Naive thymus-derived CD4-positive, alpha-beta T cell (primary cell): ENCODE measurements at regions of chrX and their contacts with region 1.

Region 1: GRCh38 chrX:129678614-129679195 is 23.9 kb upstream of the APLN start:
- DNase-seq: peak in 7 of 9 donors; percentile 6 to 40 (median 34)
- ATAC-seq: peak; percentile 78
- H3K4me3 ChIP-seq: peak overlapping the region; percentile 53
- H3K4me3 Mint-ChIP-seq: peak overlapping the region; percentile 62 to 85 (median 70)
- H3K27ac ChIP-seq: peak overlapping the region; percentile 38
- H3K27ac Mint-ChIP-seq: peak overlapping the region in 7 of 9 donors; percentile 5 to 91 (median 48)
- H3K4me1 ChIP-seq: peaks cover 5 to 14% of the 10 kb centered on the region in 2 donors
- H3K4me1 Mint-ChIP-seq: peaks cover 10 to 36% (median 23%) of the 10 kb centered on the region in 7 donors
- H3K27me3 ChIP-seq: no peaks in the 10 kb centered on the region
- H3K27me3 Mint-ChIP-seq: peaks cover 0 to 21% (median 0%) of the 10 kb centered on the region in 5 donors

Region 2: DNA sequence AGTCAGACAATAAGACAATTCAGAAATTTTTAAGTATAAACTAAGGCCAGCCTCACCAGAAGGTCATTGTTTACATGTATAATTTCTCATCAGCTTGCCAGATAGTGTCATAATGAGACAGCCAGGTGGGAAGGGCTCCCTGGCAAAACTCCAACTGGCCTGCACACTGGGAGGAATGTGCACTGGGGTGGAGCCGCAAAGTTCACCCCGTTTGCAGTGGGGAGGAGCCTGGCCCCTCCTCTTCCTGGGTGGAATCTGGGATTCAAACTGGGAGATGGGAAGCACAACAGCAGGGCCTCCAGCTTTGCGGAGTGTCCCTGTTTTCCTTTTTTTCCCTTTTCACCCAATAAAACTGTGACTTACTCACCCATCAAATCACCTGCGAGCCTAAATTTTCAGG is 485.3 kb before region 1 on chrX:
- CTCF ChIA-PET with region 1: no interaction called
- POLR2A ChIA-PET with region 1: no interaction called
- intact Hi-C with region 1: no loop called
- DNase-seq: no peak
- ATAC-seq: no peak
- H3K4me3 ChIP-seq: no peak overlapping the region
- H3K4me3 Mint-ChIP-seq: no peak overlapping the region
- H3K27ac ChIP-seq: no peak overlapping the region
- H3K27ac Mint-ChIP-seq: no peak overlapping the region
- H3K4me1 ChIP-seq: no peaks in the 10 kb centered on the region
- H3K4me1 Mint-ChIP-seq: no peaks in the 10 kb centered on the region
- H3K27me3 ChIP-seq: no peaks in the 10 kb centered on the region
- H3K27me3 Mint-ChIP-seq: no peaks in the 10 kb centered on the region

Region 3: DNA sequence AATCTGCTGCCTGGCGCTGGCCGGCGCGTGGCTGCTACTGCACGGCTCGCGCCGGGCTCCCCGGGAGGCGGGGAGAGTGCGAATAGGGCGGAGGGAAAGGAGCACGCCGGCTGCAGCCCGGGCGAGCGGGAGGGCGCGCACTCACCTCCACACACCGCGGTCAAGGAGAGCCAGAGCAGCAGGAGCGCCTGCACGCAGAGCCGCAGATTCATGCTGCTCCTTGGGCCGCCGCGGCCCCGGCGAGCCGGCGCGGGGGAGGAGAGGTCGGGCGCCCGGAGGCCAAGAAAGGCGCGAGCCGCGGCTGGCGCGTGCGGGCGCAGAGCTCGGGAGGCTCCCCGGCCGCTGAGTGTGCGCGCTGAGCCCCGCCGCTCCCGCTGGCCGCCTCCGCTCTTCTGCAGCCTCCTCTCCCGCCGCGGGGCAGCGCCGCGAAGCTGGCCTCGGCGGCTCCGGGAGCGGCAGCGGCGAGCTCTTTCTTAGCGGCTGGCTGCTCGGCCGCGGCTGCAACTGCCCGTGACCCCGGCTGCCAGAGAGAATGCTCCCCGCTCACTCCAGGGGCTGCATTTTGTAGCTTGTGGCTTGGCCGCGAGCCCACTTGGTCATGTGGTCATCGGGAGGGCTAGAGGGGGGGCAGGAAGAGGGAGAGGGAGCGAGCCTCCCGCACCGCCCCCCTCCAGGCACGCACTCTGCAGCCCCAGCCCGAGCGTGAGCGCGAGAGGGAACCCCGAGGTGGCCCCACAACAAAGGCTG is 24.1 kb before region 1 on chrX and contains the start of gene APLN:
- CTCF ChIA-PET with region 1: no interaction called
- POLR2A ChIA-PET with region 1: no interaction called
- intact Hi-C with region 1: loop called in 1 of 2 experiments (anchors 1 kb)
- DNase-seq: peak in 2 of 9 donors; percentile 18 to 28
- ATAC-seq: peak; percentile 64
- H3K4me3 ChIP-seq: peak within 1 kb of the TSS; percentile 9
- H3K4me3 Mint-ChIP-seq: peak within 1 kb of the TSS; percentile 54 to 85 (median 68)
- H3K27ac ChIP-seq: no peak within 1 kb of the TSS
- H3K27ac Mint-ChIP-seq: peak within 1 kb of the TSS in 1 of 9 donors; percentile 9
- H3K4me1 ChIP-seq: peaks cover 3 to 7% of the 10 kb centered on the region in 2 donors
- H3K4me1 Mint-ChIP-seq: peaks cover 6 to 12% (median 9%) of the 10 kb centered on the region in 7 donors
- H3K27me3 ChIP-seq: no peaks in the 10 kb centered on the region
- H3K27me3 Mint-ChIP-seq: peaks cover 4 to 25% (median 5%) of the 10 kb centered on the region in 5 donors
- total RNA-seq, gene APLN: 0.10 TPM in 1 of 5 experiments, not detected in the others

Region 4: GRCh38 chrX:129719931-129720530 is 41.3 kb after region 1 on chrX:
- CTCF ChIA-PET with region 1: no interaction called
- POLR2A ChIA-PET with region 1: no interaction called
- intact Hi-C with region 1: loop called (anchors 5 kb)
- DNase-seq: no peak
- ATAC-seq: no peak
- H3K4me3 ChIP-seq: no peak overlapping the region
- H3K4me3 Mint-ChIP-seq: no peak overlapping the region
- H3K27ac ChIP-seq: no peak overlapping the region
- H3K27ac Mint-ChIP-seq: no peak overlapping the region
- H3K4me1 ChIP-seq: peaks cover 5 to 9% of the 10 kb centered on the region in 2 donors
- H3K4me1 Mint-ChIP-seq: peaks cover 8 to 27% (median 21%) of the 10 kb centered on the region in 7 donors
- H3K27me3 ChIP-seq: no peaks in the 10 kb centered on the region
- H3K27me3 Mint-ChIP-seq: no peaks in the 10 kb centered on the region